Mammary epithelial cell (primary cell): ENCODE measurements at regions of chr19 and their contacts with region 1.

Region 1: DNA sequence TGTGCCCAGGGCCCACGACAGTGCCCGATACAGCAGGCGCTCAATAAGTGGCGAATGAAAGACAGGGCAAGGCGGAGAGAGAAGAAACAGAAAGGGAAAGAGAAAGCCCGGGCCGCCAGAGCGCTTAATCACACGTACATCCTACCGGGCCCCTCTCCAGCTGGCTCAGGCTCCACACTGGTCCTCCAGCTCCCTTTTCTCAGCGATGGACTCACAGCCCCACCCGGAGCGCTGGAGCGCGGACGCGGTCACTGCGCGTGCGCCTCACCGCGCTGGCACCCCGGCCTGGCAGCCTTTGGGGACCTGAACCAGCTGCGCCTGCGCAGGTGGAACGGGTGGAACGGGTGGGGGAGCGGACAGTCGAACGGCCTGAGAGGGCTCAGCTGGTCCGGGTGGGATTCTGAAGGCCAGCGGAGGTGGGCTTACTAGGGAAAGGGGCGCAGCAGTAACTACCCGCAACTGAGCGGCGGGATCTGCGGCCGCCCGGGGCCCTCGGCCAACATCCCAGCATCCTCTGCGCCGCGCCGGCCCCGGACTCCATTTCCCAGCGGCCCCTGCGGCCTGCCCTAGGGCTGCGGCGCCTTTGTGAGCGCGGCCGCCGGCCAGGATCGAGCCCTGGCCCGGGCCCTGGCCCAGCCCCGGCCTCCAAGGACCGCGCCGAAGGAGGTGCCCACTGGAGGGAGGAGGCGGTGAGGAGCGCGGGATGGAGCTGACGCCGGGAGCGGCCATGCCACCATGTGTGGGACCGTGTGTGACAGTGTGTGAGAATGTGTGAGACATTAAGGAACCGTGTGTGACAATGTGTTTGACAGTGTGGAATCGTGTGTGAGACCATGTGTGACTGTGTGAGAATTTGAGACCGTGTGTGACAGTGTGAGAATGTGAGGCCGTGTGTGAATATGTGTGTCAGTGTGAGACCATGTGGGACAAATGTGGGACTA is at the start of gene ZNF583:
- DNase-seq: peak; percentile 96
- H3K4me3 ChIP-seq: peak within 1 kb of the TSS; percentile 64 to 88 (median 67)
- H3K27ac ChIP-seq: peak within 1 kb of the TSS; percentile 9
- H3K4me1 ChIP-seq: peaks cover 7% of the 10 kb centered on the region
- H3K27me3 ChIP-seq: no peaks in the 10 kb centered on the region
- CTCF ChIP-seq: no peak
- total RNA-seq, gene ZNF583: 4.7 to 5.5 TPM

Region 2: GRCh38 chr19:56423276-56423984 is 19.4 kb after region 1 on chr19:
- CTCF ChIA-PET with region 1: no interaction called
- dilution Hi-C with region 1: no loop called
- in situ Hi-C with region 1: no loop called
- intact Hi-C with region 1: no loop called
- DNase-seq: no peak
- H3K4me3 ChIP-seq: no peak overlapping the region
- H3K27ac ChIP-seq: no peak overlapping the region
- H3K4me1 ChIP-seq: no peaks in the 10 kb centered on the region
- H3K27me3 ChIP-seq: no peaks in the 10 kb centered on the region
- CTCF ChIP-seq: no peak

Region 3: DNA sequence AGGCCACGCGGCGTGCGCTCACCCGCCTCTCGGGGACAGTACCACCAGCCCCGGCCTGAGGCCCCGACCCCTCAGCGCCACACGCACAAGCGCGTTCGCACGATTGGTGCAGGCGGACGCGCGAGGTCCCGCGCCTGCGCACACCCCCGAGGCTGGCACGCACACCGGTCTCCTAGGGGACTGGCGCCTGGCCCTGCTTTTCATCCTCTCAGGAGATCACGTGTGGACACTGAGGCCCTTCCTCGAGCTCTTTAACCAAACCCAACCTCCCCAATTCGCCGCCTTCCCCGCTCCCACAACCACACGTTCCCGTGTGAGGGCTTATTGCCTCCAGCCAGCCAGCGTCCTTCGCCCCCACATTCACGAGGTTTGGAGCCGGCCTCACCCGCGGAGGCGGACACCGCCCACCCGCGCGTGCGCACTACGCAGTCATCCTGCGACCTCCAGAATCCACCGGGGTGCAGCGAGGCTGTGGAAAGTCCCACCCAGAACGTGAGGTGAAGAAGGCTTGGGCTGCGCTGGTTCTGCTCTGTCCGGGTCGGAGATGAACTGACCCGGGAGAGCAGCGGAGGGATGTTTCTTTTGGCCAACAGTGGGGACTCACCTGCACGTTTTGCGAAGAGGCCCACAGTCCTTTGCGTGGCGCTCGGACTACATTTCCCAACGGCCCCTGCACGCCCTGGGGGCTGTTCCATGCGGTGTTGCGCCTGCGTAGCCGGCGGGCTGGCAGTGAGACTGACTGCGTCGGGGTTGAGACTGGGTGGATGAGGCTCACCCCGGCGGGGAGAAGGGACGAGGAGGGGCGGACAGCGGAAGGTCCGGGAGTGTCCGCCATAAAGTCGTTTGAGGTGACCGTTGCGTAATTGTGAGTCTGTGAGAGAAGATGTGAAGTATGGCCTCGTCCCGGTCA is 73.7 kb after region 1 on chr19:
- CTCF ChIA-PET with region 1: no interaction called
- dilution Hi-C with region 1: no loop called
- in situ Hi-C with region 1: no loop called
- intact Hi-C with region 1: loop called (anchors 5 kb)
- DNase-seq: peak; percentile 94
- H3K4me3 ChIP-seq: peak overlapping the region; percentile 47 to 64 (median 61)
- H3K27ac ChIP-seq: no peak overlapping the region
- H3K4me1 ChIP-seq: peaks cover 4% of the 10 kb centered on the region
- H3K27me3 ChIP-seq: no peaks in the 10 kb centered on the region
- CTCF ChIP-seq: no peak

Region 4: DNA sequence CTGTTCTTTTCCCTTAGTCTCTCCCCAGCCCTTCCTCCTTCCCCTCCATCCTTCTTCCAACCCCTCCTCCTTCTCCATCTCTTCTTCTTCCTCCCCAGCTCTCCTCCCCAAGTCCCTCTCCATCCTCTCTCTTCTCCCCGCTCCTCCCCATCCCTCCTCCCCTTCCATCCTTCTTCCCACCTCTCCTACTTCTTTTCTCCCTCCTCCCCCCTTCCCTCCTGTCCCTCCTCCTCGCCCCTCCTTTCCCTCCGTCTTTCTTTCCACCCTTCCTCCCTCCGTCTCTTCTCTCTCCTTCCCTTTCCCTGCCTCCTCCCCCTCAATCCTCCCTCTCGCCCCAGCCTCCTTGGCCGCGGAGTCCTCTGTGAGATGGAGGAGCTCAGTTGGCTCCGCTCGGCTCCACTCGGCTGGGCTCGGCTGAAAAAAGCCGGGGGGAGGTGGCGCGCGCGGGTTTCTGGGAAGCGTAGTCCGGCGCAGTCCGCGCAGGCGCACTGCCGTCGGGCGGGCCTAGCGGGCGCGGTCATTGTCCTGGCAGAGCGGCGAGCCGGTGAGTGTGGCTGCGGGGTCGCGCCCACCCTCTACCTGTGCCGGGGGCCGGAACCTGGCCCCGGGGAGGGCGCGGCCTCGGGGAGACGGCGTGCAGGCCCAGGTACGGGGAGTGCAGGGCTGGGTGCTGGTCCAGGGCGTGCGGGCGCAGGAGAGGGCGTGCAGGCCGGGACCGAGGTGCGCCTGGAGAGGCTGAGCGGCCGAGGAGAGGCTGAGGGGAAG is 190.9 kb after region 1 on chr19 and contains the start of gene ZNF71:
- CTCF ChIA-PET with region 1: no interaction called
- dilution Hi-C with region 1: no loop called
- in situ Hi-C with region 1: no loop called
- intact Hi-C with region 1: loop called (anchors 5 kb)
- DNase-seq: peak; percentile 83
- H3K4me3 ChIP-seq: peak within 1 kb of the TSS; percentile 85 to 99 (median 98)
- H3K27ac ChIP-seq: no peak within 1 kb of the TSS
- H3K4me1 ChIP-seq: peaks cover 4% of the 10 kb centered on the region
- H3K27me3 ChIP-seq: no peaks in the 10 kb centered on the region
- CTCF ChIP-seq: no peak
- total RNA-seq, gene ZNF71: 6.7 to 12.5 TPM